Activated CD4-positive, alpha-beta T cell treated with anti-CD3 and anti-CD28 coated beads for 36 hours (primary cell): ENCODE measurements at regions of chr3 and their contacts with region 1.

Region 1: GRCh38 chr3:190321789-190322603 is at the start of gene CLDN1:
- DNase-seq: peak; percentile 86
- ATAC-seq: peak; percentile 66
- H3K4me3 Mint-ChIP-seq: peak within 1 kb of the TSS; percentile 71
- H3K27ac Mint-ChIP-seq: peak within 1 kb of the TSS; percentile 24
- H3K4me1 Mint-ChIP-seq: peaks cover 41% of the 10 kb centered on the region
- H3K27me3 Mint-ChIP-seq: peaks cover 48% of the 10 kb centered on the region
- total RNA-seq, gene CLDN1: 1.6 TPM

Region 2: DNA sequence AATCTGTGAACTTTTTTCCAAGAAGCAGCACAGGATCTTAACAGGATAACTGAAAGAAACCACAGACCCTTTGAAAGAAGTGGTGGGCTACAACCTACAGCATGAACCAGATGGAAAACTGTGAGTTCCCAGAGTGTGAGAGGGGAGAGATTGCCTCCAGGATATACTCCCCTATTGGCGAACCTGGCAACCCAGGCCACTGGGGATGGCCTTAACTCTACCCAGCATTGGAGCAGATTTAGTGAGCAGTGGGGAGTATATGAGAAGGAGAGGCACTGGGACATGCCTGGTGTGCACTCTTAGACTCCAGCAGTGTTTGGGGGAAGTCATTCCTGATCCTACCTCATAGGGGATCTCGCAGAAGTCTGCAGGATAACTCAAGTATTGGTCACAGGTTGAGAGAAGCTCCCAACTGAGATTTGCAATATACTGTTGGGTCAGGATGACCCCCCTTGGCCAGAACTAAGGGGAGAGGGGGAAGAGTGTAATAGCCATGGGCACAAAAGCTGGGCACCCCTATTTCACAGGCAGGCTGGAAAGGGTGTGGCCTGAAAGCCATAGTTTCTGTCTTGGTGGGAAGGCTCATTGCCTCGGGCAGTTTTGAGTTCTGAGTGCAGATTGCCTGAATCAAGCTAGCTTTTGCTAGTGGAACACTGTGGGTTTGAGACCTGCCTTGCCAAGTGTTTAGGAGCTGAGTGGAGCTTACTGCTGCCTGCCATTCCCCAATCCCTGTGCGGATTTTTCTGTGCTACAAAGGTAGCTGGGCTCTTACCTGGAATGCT is 891.6 kb before region 1 on chr3:
- CTCF ChIA-PET with region 1: no interaction called
- POLR2A ChIA-PET with region 1: no interaction called
- intact Hi-C with region 1: no loop called
- DNase-seq: no peak
- ATAC-seq: no peak
- H3K4me3 Mint-ChIP-seq: no peak overlapping the region
- H3K27ac Mint-ChIP-seq: no peak overlapping the region
- H3K4me1 Mint-ChIP-seq: peaks cover 1% of the 10 kb centered on the region
- H3K27me3 Mint-ChIP-seq: no peaks in the 10 kb centered on the region

Region 3: DNA sequence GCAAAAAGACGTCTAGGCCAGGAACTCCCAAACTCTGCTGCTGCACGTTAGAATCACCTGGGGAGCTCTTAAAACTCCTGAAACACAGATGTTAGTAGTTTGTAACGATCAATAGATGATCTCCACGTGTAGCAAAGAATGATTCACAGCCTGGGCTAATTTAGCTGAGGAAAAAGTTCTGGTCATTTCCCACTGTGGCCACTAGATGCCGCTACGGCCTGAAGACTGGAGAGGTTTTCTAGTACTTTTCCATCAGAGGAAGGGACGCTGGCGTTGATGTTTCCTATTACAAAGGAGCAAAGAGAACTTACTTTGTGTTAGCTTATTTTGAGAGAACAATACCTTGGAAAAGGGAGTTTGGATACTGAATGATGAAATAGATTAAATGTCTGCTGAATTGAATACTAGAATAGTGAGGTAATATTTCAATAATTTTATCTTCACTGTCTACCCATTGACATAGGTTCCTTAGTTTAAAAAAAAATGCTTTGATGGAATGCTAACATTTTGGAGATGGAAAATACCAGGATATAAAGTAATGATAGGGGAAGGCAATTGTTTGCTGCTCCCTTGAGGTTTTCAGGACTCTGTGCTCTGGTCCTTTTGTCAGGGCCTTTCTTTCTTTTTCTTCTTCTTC is 360.4 kb before region 1 on chr3:
- CTCF ChIA-PET with region 1: interaction called, 11 read pairs
- POLR2A ChIA-PET with region 1: no interaction called
- intact Hi-C with region 1: loop called in 1 of 2 experiments (anchors 2 kb)
- DNase-seq: peak; percentile 85
- ATAC-seq: peak; percentile 78
- H3K4me3 Mint-ChIP-seq: no peak overlapping the region
- H3K27ac Mint-ChIP-seq: no peak overlapping the region
- H3K4me1 Mint-ChIP-seq: peaks cover 8% of the 10 kb centered on the region
- H3K27me3 Mint-ChIP-seq: peaks cover 7% of the 10 kb centered on the region

Region 4: GRCh38 chr3:190205739-190206138 is 116.3 kb before region 1 on chr3:
- CTCF ChIA-PET with region 1: no interaction called
- POLR2A ChIA-PET with region 1: no interaction called
- intact Hi-C with region 1: loop called in 1 of 2 experiments (anchors 5 kb)
- DNase-seq: no peak
- ATAC-seq: peak; percentile 93
- H3K4me3 Mint-ChIP-seq: no peak overlapping the region
- H3K27ac Mint-ChIP-seq: peak overlapping the region; percentile 67
- H3K4me1 Mint-ChIP-seq: peaks cover 18% of the 10 kb centered on the region
- H3K27me3 Mint-ChIP-seq: peaks cover 29% of the 10 kb centered on the region

Region 5: DNA sequence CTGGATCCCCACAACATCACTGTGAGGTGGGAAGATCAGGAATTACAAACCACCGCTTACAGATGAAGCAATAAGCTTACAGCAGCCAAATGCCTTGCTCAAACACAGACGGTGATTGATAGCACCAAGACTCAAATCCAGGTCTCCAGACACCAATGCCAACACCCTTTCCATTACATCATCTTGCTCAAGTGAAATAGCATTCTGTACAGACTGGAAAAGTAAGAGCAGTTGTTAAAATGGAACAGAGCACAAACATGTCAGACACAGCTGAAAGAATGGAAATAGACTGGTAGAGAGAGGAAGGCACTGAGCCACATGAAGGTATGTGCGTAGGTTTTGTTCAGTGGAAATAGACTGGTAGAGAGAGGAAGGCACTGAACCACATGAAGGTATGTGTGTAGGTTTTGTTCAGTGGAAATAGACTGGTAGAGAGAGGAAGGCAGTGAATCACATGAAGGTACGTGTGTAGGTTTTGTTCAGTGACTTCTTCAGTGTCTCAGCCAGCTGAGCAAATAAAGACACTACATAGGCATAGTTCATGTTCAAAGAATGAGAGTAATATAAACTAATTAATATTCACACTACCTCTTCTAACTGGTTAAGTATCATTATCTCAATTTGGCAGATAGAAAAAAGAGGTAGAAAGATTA is 15.4 kb before region 1 on chr3:
- CTCF ChIA-PET with region 1: interaction called, 14 read pairs
- POLR2A ChIA-PET with region 1: no interaction called
- intact Hi-C with region 1: loop called (anchors 1 kb)
- DNase-seq: peak; percentile 53
- ATAC-seq: peak; percentile 94
- H3K4me3 Mint-ChIP-seq: peak overlapping the region; percentile 23
- H3K27ac Mint-ChIP-seq: peak overlapping the region; percentile 91
- H3K4me1 Mint-ChIP-seq: peaks cover 34% of the 10 kb centered on the region
- H3K27me3 Mint-ChIP-seq: peaks cover 6% of the 10 kb centered on the region

Region 6: DNA sequence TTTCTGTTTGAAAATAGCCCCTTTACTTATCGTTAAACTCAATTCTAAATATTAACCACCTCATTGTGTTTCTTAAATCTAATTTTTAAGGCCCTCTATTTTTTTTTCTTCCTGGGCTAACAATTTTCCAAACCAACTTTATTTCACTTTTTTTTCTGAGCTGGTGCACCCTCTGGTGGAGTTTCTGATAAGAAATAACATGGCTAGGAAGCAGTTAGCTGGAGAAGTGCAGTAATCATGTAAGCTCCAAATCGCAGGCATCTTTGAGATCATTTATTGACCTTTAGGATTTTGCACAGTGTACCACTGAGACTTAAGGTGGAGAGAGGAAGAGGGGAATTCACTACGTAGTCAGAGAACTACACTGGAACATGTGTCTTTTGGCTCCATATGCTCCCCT is 121.3 kb after region 1 on chr3:
- CTCF ChIA-PET with region 1: no interaction called
- POLR2A ChIA-PET with region 1: no interaction called
- intact Hi-C with region 1: no loop called
- DNase-seq: no peak
- ATAC-seq: no peak
- H3K4me3 Mint-ChIP-seq: no peak overlapping the region
- H3K27ac Mint-ChIP-seq: no peak overlapping the region
- H3K4me1 Mint-ChIP-seq: peaks cover 8% of the 10 kb centered on the region
- H3K27me3 Mint-ChIP-seq: peaks cover 9% of the 10 kb centered on the region

Region 7: GRCh38 chr3:191051037-191051436 is 729.0 kb after region 1 on chr3:
- CTCF ChIA-PET with region 1: no interaction called
- POLR2A ChIA-PET with region 1: no interaction called
- intact Hi-C with region 1: loop called in 1 of 2 experiments (anchors 5 kb)
- DNase-seq: no peak
- ATAC-seq: no peak
- H3K4me3 Mint-ChIP-seq: no peak overlapping the region
- H3K27ac Mint-ChIP-seq: no peak overlapping the region
- H3K4me1 Mint-ChIP-seq: no peaks in the 10 kb centered on the region
- H3K27me3 Mint-ChIP-seq: peaks cover 2% of the 10 kb centered on the region